ENCODE measurements at regions of chr12 and their contacts with region 1.

Region 1: DNA sequence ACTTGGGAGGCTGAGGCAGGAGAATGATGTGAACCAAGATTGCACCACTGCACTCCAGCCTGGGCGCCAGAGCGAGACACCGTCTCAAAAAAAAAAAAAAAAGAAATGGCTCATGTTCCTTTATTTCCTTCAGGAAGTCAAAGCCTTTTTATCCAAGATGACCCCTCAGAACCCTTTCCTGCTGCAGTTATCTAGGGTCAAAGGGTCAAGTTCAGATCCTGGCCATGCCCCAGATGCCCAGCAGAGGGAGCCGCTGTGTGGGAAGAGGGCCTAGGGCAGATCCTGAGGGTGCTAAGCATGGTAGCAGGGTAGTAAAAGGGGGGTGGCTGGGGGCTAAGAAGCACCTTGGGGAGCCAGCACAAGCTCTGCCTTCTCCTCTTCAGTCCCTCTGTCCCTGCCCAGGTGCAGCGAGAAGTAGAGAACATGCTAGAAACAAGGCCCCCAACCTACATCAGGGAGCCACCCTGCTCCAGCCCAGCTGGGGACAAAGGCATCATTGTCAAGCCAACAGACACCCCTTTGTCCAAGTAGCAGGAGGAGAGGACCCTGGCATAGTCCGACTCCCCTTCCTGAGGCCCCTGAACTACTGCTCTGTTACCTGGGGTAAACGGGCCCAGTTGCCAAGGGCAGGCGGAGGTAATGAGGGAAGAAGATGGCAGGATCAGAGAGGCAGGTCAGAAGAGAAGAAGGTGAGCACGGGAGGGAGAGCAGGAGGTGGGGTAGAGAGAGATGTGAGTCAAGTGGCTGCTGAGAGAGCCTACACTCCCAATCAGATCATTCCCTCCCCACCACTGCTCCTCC is 6.5 kb downstream of the NFE2 start:
- DNase-seq: peak; percentile 64 to 76 (median 73)
- H3K4me3 ChIP-seq: peak overlapping the region in 5 of 7 experiments; percentile 40 to 86 (median 59)
- H3K27ac ChIP-seq: peak overlapping the region; percentile 22 to 95
- H3K4me1 ChIP-seq: peaks cover 24 to 93% (median 86%) of the 10 kb centered on the region in 4 experiments
- H3K27me3 ChIP-seq: no peaks in the 10 kb centered on the region

Region 2: GRCh38 chr12:54359033-54359761 is 64.8 kb after region 1 on chr12:
- CTCF ChIA-PET with region 1: interaction called, 120 read pairs
- POLR2A ChIA-PET with region 1: interaction called, 5 read pairs
- DNase-seq: peak; percentile 99
- H3K4me3 ChIP-seq: peak overlapping the region; percentile 56 to 78 (median 74)
- H3K27ac ChIP-seq: peak overlapping the region; percentile 51 to 90
- H3K4me1 ChIP-seq: peaks cover 13 to 62% (median 53%) of the 10 kb centered on the region in 4 experiments
- H3K27me3 ChIP-seq: no peaks in the 10 kb centered on the region

Region 3: DNA sequence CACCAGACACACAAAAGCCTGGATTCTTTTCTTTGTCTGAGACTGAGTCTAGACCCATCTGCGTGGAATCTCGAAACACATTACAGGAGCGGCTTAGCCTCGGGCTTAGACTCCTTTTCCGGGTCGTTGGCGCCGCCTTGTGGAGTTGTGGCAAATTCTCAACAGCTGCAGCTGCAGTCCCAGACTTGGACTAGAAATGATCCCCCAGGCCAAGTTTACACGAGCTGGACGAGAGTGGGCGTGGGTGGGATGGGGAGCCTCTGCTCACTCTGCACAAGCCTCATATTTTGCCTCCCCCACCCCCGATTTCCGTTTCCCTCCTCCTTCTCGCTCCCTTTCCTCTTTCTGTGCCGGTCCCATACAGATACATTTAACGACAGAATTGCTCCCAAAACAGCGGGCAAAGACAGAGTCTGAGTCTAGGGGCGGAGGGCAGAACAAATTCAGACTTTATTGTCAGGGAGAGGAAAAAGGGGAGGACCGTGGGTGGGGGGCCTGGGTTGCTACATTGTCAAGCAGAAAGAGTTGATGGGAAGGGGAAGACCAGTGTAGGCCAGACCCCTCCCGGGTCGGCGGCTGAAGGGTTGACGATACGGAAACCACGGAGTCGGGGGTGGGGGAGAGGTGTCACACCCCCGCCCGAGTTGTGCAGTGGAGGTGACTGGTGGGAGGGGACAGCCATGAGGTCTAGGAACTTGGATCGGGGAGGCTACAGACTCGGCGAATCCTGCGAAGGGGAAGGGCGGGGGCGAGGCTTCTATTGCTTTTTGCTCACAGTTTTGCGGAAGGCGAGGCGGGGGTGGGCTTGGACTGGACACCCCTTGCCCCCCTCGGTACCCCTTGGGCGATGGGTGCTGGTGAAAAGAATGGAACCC is 74.6 kb after region 1 on chr12:
- CTCF ChIA-PET with region 1: interaction called, 120 read pairs
- POLR2A ChIA-PET with region 1: interaction called, 5 read pairs
- DNase-seq: peak; percentile 83 to 91 (median 87)
- H3K4me3 ChIP-seq: peak overlapping the region in 4 of 7 experiments; percentile 48 to 67 (median 51)
- H3K27ac ChIP-seq: peak overlapping the region in 1 of 2 experiments; percentile 25
- H3K4me1 ChIP-seq: peaks cover 15 to 51% (median 40%) of the 10 kb centered on the region in 4 experiments
- H3K27me3 ChIP-seq: no peaks in the 10 kb centered on the region

Region 4: GRCh38 chr12:54463034-54463433 is 168.7 kb after region 1 on chr12:
- CTCF ChIA-PET with region 1: no interaction called
- POLR2A ChIA-PET with region 1: no interaction called
- DNase-seq: peak in 2 of 3 donors; percentile 52 to 60
- H3K4me3 ChIP-seq: no peak overlapping the region
- H3K27ac ChIP-seq: no peak overlapping the region
- H3K4me1 ChIP-seq: no peaks in the 10 kb centered on the region
- H3K27me3 ChIP-seq: no peaks in the 10 kb centered on the region

Region 5: GRCh38 chr12:54697851-54698250 is 403.5 kb after region 1 on chr12:
- CTCF ChIA-PET with region 1: no interaction called
- POLR2A ChIA-PET with region 1: no interaction called
- DNase-seq: peak in 1 of 3 donors; percentile 21
- H3K4me3 ChIP-seq: no peak overlapping the region
- H3K27ac ChIP-seq: no peak overlapping the region
- H3K4me1 ChIP-seq: no peaks in the 10 kb centered on the region
- H3K27me3 ChIP-seq: peaks cover 0 to 5% (median 0%) of the 10 kb centered on the region in 5 experiments

Measured in common myeloid progenitor, CD34-positive (primary cell).